ENCODE measurements at regions of chr13 and their contacts with region 1.

Region 1: DNA sequence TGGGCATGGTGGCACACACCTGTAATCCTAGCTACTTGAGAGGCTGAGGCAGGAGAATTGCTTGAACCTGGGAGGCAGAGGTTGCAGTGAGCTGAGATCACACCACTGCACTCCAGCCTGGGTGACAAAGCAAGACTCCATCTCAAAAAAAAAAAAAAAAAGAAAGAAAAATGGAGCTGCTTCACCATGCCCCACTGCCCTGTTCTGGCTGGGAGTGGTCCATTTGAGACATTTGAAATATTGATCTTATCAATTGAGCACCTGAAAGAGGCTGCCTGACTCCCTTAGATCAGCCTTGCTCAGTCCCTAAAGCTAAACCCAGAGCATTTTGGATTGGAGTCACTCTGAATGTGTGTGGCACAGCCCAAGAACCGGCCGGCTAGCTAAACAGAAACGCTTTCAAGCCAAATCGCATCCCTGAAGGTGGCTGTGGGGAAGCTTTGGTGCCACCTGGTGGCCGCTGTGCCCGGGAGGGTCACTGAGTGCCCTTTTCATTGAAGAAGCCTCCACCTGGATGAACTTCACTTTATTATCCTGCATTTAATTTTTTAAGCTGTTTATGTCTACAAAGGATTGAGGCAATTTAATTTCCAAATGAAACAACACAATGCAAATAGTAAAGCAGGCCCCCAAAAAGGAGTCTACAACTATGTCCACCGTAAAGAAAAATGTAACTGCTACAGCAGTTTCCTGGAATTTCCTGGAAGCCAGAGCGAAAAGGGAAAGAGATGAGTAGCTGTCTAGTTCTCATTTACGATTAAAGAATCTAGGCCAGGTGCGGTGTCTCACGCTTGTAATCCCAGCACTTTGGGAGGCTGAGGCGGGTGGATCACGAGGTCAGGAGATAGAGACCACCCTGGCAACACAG is 53.1 kb upstream of the SERPINE3 start:
- DNase-seq: no peak
- H3K4me3 ChIP-seq: no peak overlapping the region
- H3K27me3 ChIP-seq: peaks cover 2% of the 10 kb centered on the region; the same call in 1 of the 2 replicates
- CTCF ChIP-seq: peak; percentile 96

Region 2: GRCh38 chr13:50991579-50992521 is 294.5 kb before region 1 on chr13:
- CTCF ChIA-PET with region 1: no interaction called
- POLR2A ChIA-PET with region 1: no interaction called
- DNase-seq: no peak
- H3K4me3 ChIP-seq: no peak overlapping the region
- H3K27me3 ChIP-seq: peaks cover 9% of the 10 kb centered on the region
- CTCF ChIP-seq: no peak

Region 3: DNA sequence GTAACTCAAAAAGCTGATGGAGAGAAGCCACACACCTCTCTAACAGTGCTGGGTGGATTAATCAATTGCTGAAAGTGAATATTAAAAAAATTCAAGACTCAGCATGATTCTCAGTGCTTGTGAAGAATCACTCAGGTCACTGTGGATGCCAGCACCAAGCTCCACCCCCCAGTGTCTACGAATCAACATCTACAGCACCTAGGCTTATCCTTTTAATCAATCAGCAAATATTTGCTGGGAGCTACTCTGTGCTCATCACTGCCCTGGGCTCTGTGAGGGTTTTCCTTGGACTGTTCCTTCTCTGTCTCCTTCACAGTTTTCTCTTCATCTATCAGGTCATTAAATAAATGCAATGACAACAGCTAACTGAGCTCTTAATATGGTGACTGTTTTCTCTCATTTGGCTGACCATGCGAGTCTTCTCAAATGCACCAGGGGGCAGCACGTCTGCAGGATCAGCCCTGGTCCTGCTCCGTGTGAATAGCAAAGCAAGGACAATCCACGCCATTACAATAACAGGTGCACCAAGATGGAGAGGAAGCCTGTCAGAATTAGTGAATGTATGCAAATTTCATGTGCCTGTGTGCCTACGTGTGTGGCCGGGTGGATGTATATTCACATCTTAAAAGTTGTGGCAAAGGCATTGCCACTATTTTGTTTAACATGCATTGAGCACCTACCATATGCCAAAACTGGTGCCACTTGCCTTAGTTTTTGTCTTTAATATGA is 160.7 kb before region 1 on chr13:
- CTCF ChIA-PET with region 1: interaction called, 91 read pairs
- POLR2A ChIA-PET with region 1: no interaction called
- DNase-seq: no peak
- H3K4me3 ChIP-seq: no peak overlapping the region
- H3K27me3 ChIP-seq: no peaks in the 10 kb centered on the region
- CTCF ChIP-seq: peak; percentile 85

Region 4: GRCh38 chr13:51222686-51223559 is 63.4 kb before region 1 on chr13:
- CTCF ChIA-PET with region 1: interaction called, 16 read pairs
- POLR2A ChIA-PET with region 1: no interaction called
- DNase-seq: no peak
- H3K4me3 ChIP-seq: peak overlapping the region; percentile 35
- H3K27me3 ChIP-seq: peaks cover 25% of the 10 kb centered on the region
- CTCF ChIP-seq: peak; percentile 16; the same call in 1 of the 2 replicates

Region 5: DNA sequence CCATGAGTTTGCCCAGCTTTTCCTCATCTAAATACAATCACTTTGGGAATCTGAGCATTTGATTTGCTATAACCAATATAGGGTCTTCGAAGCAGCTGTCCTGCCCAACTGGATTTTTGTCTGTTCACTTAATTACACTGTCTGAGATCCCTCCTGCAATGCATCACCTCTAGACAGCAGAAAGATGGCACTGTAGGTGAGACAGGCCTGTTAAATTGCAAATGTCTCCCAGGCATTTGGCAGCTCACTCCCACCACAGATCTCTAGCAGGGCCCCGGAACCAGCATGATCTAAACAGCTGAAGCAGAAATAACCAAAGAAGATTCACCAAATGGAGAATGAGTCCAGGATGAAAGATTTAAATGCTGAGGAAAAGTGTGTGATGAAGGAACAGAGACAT is 11.2 kb after region 1 on chr13:
- CTCF ChIA-PET with region 1: interaction called, 29 read pairs
- POLR2A ChIA-PET with region 1: no interaction called
- DNase-seq: no peak
- H3K4me3 ChIP-seq: no peak overlapping the region
- H3K27me3 ChIP-seq: peaks cover 4% of the 10 kb centered on the region
- CTCF ChIP-seq: no peak

Region 6: DNA sequence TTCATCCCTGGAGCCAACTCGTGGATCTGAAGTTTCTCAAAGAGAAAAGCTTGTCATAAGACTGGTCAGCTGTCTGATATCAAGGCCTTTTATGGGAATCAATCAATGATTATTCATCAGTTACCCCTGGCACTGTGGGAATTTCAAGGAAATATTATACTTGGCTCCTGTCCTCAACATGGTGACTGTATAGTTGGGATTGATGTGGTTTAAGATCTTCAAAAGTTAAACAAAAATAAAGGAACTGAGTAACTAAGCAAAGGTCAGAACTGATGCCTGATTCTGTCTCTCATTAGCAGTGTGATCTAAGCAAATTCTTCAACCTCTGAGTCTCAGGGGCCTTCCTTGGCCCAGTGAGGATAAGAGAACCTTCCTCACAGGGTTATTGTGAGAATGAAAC is 30.9 kb after region 1 on chr13:
- CTCF ChIA-PET with region 1: interaction called, 11 read pairs
- POLR2A ChIA-PET with region 1: no interaction called
- DNase-seq: no peak
- H3K4me3 ChIP-seq: no peak overlapping the region
- H3K27me3 ChIP-seq: peaks cover 6% of the 10 kb centered on the region; the same call in 1 of the 2 replicates
- CTCF ChIP-seq: no peak